Activated CD4-positive, alpha-beta memory T cell treated with anti-CD3 and anti-CD28 coated beads for 36 hours (primary cell): ENCODE measurements at regions of chr11 and their contacts with region 1.

Region 1: GRCh38 chr11:62427630-62428233 is 8.9 kb downstream of the SCGB1A1 start:
- DNase-seq: peak; percentile 39
- H3K4me3 Mint-ChIP-seq: peak overlapping the region; percentile 27
- H3K27ac Mint-ChIP-seq: peak overlapping the region; percentile 79
- H3K4me1 Mint-ChIP-seq: peaks cover 32% of the 10 kb centered on the region
- H3K27me3 Mint-ChIP-seq: no peaks in the 10 kb centered on the region

Region 2: GRCh38 chr11:62394825-62395538 is 32.8 kb before region 1 on chr11:
- CTCF ChIA-PET with region 1: interaction called, 49 read pairs
- POLR2A ChIA-PET with region 1: no interaction called
- intact Hi-C with region 1: loop called (anchors 2 kb)
- DNase-seq: peak; percentile 54
- H3K4me3 Mint-ChIP-seq: no peak overlapping the region
- H3K27ac Mint-ChIP-seq: peak overlapping the region; percentile 9
- H3K4me1 Mint-ChIP-seq: peaks cover 13% of the 10 kb centered on the region
- H3K27me3 Mint-ChIP-seq: no peaks in the 10 kb centered on the region

Region 3: DNA sequence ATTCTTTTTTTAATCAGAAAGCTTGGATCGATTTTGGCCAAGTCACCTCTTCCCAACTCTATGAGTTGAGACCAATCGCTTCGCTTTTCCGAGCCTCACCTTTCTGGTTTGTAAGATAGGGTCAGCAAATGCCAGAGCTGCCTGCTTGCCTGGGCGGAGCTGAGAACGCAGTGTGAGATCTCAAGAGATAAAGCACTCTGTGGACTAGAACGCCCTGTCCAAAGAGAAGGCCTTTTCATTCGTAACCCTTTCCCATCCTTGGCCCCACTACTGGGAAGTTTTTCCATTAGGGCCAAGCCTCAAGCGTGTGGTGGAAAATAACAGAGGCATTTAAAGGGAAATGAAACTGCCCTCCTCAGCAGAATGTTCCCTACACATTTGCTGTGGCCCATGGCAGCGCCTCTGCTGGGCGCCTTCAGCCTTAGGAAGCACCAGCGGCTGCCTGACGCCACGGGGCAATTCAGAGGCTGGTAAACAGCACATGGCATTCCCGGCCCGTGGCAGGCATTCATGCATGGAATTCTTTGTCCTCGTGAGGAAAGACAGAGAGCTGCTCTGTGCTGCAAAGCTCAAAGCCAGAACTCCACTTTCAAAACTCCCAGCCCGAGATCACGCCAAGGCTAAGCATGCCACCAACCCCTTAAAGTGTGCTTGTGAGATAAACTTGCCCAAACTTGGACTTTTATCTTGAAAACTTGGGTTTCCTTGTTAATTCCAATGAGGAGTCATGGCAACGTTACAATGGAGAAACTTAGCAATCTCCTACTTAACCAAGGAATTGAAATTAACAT is 80.7 kb after region 1 on chr11:
- CTCF ChIA-PET with region 1: interaction called, 17 read pairs
- POLR2A ChIA-PET with region 1: no interaction called
- intact Hi-C with region 1: no loop called
- DNase-seq: no peak
- H3K4me3 Mint-ChIP-seq: no peak overlapping the region
- H3K27ac Mint-ChIP-seq: no peak overlapping the region
- H3K4me1 Mint-ChIP-seq: peaks cover 4% of the 10 kb centered on the region
- H3K27me3 Mint-ChIP-seq: no peaks in the 10 kb centered on the region

Region 4: GRCh38 chr11:62556108-62556871 is 128.6 kb after region 1 on chr11:
- CTCF ChIA-PET with region 1: interaction called, 161 read pairs
- POLR2A ChIA-PET with region 1: interaction called, 8 read pairs
- intact Hi-C with region 1: loop called (anchors 1 kb)
- DNase-seq: peak; percentile 94
- H3K4me3 Mint-ChIP-seq: peak overlapping the region; percentile 59
- H3K27ac Mint-ChIP-seq: peak overlapping the region; percentile 96
- H3K4me1 Mint-ChIP-seq: peaks cover 96% of the 10 kb centered on the region
- H3K27me3 Mint-ChIP-seq: peaks cover 2% of the 10 kb centered on the region

Region 5: GRCh38 chr11:62573592-62574362 is 146.0 kb after region 1 on chr11 and contains the start of gene EEF1G:
- CTCF ChIA-PET with region 1: interaction called, 30 read pairs
- POLR2A ChIA-PET with region 1: interaction called, 4 read pairs
- intact Hi-C with region 1: no loop called
- DNase-seq: peak; percentile 99
- H3K4me3 Mint-ChIP-seq: peak within 1 kb of the TSS; percentile 93
- H3K27ac Mint-ChIP-seq: peak within 1 kb of the TSS; percentile 96
- H3K4me1 Mint-ChIP-seq: peaks cover 50% of the 10 kb centered on the region
- H3K27me3 Mint-ChIP-seq: no peaks in the 10 kb centered on the region
- total RNA-seq, gene EEF1G: 1,956 to 1,989 TPM

Region 6: DNA sequence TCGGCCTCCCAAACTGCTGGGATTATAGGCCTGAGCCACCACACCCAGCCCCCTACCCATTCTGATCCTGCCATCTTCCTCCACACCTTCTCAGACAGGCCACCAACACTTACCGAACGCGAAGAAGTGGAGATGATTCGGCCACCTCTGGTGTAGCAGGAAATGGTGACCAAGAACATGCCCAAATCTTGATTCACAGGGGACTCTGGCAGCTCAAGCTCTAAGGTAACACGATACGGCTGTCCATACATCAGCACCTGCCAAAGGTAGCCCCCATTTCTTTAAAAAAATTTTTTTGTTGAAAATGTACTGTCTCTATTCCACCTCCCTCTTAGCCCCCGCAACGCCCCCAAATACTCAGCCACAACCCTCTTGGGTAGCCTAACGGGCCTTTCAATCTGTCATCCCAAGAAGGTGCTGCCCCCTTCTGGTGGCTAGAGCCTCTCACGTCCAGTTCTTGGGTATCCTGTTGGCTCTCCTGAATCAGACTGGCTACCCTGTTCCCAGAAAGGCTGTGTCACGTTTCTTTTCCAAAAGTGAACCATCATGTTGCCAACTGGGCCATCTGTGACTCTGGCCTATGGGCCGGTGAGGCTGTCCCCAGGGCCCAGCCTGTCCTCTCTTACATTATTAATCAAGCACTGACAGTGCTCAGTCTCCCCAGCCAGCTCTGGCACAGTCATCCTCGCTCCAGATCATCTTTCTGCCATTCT is 266.9 kb after region 1 on chr11:
- CTCF ChIA-PET with region 1: interaction called, 32 read pairs
- POLR2A ChIA-PET with region 1: no interaction called
- intact Hi-C with region 1: no loop called
- DNase-seq: peak; percentile 81
- H3K4me3 Mint-ChIP-seq: no peak overlapping the region
- H3K27ac Mint-ChIP-seq: no peak overlapping the region
- H3K4me1 Mint-ChIP-seq: peaks cover 5% of the 10 kb centered on the region
- H3K27me3 Mint-ChIP-seq: no peaks in the 10 kb centered on the region